Activated CD4-positive, alpha-beta T cell treated with anti-CD3 and anti-CD28 coated beads, Interleukin-2, amount 10 ng/mL, durations not matched to agents 24 days and 14 days (primary cell): ENCODE measurements at regions of chr10 and their contacts with region 1.

Region 1: DNA sequence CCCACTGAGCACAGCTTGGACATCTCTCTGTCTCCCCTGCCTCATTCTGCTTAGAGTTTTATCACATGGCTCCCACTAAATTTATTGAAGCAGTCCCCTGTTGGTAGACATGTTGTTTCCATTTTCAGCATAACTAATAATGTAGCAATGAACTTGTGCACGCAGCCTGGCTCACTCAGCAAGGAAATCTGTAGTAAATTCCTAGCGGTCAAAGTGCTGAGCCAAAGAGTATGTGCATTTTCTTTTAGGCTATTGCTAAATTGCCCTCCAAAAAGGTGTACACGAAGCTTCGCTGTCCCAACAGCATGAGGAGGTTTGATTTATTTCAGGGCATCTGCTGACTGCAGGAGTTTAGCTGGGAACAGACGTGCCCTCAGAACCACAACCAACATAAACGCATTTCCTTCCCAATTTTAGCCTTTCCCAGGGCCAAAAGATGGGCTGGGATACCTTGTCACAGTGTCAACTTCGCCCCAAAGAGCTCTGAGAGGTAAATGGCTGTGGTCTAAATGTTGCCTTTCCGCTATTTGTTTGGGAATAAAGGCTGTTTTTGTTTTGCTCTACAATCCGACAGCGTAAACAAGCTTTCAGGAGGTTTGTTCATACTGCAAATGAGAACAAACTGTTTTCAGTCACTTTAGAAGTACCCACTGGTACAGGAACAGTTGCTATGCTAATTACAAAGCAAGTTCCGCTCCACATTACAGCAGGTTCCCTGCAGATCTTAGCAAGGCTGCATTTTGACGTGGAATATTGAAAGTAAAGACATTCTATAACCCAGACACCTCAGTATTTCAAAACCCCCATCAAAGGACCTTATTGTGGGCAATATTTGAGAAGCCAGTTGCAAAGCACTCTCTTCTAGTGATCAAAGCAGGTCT is 16.8 kb downstream of the VSIR start:
- DNase-seq: peak; percentile 82
- H3K4me3 Mint-ChIP-seq: peak overlapping the region; percentile 74
- H3K27ac Mint-ChIP-seq: peak overlapping the region; percentile 92
- H3K4me1 Mint-ChIP-seq: peaks cover 74% of the 10 kb centered on the region
- H3K27me3 Mint-ChIP-seq: no peaks in the 10 kb centered on the region

Region 2: DNA sequence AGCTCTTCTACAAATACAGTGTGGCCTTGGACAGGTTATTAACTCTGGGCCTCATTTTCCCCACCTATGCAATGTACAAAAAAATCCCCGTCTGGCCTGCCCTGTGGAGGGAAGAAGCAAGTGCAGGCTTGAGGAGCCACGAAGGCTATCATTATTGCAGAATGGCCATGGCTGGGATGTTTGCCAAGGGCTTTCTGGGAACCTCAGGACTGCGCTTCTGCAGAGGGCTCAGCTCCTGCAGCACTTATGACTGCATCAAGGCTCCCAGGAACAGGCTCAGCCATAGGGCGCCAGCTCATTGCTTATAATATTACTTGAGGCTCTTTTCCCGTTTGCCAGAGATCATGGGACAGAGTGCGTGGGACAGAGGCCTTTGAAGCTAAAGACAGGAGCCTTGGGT is 16.5 kb before region 1 on chr10:
- intact Hi-C with region 1: loop called (anchors 2 kb)
- DNase-seq: no peak
- H3K4me3 Mint-ChIP-seq: no peak overlapping the region
- H3K27ac Mint-ChIP-seq: peak overlapping the region; percentile 86
- H3K4me1 Mint-ChIP-seq: peaks cover 85% of the 10 kb centered on the region
- H3K27me3 Mint-ChIP-seq: no peaks in the 10 kb centered on the region